Activated CD4-positive, alpha-beta T cell treated with anti-CD3 and anti-CD28 coated beads, Interleukin-2, amount 10 ng/mL, durations not matched to agents 24 days and 14 days (primary cell): ENCODE measurements at regions of chr1 and their contacts with region 1.

Region 1: GRCh38 chr1:211323156-211324063 is 3.2 kb upstream of the TRAF5 start:
- DNase-seq: peak; percentile 91
- H3K4me3 Mint-ChIP-seq: peak overlapping the region; percentile 15
- H3K27ac Mint-ChIP-seq: peak overlapping the region; percentile 88
- H3K4me1 Mint-ChIP-seq: peaks cover 57% of the 10 kb centered on the region
- H3K27me3 Mint-ChIP-seq: no peaks in the 10 kb centered on the region

Region 2: DNA sequence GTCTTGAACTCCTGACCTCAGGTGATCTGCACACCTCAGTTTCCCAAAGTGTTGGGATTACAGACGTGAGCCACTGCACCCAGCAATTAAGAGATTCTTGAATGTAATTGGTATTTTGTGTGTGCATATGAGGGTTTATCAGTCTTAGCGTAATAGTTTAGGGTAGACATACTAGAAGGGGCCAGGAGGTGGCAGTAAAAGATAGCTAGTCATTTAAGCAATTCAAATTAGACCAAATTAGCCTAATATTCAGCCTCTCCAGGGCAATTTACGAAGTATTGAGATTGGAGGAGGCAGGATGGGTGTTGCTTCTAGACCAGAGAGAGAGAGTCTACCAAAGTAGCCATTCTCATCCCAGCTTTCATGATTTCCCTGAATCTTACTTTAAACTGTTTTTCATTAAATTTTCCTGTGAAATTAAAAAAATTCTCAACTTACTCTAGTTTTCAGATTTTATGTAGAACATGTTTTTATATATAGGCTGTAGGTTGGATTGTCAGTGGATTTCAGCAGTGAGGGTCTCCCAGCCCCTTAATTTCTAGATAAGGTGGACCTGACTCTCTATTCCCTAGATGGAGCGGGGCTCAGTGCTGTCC is 875.0 kb before region 1 on chr1:
- intact Hi-C with region 1: loop called (anchors 5 kb)
- DNase-seq: peak; percentile 72
- H3K4me3 Mint-ChIP-seq: no peak overlapping the region
- H3K27ac Mint-ChIP-seq: no peak overlapping the region
- H3K4me1 Mint-ChIP-seq: peaks cover 24% of the 10 kb centered on the region
- H3K27me3 Mint-ChIP-seq: peaks cover 14% of the 10 kb centered on the region

Region 3: GRCh38 chr1:211296396-211296795 is 27.0 kb before region 1 on chr1:
- intact Hi-C with region 1: loop called (anchors 1 kb)
- DNase-seq: no peak
- H3K4me3 Mint-ChIP-seq: no peak overlapping the region
- H3K27ac Mint-ChIP-seq: peak overlapping the region; percentile 54
- H3K4me1 Mint-ChIP-seq: peaks cover 15% of the 10 kb centered on the region
- H3K27me3 Mint-ChIP-seq: no peaks in the 10 kb centered on the region

Region 4: DNA sequence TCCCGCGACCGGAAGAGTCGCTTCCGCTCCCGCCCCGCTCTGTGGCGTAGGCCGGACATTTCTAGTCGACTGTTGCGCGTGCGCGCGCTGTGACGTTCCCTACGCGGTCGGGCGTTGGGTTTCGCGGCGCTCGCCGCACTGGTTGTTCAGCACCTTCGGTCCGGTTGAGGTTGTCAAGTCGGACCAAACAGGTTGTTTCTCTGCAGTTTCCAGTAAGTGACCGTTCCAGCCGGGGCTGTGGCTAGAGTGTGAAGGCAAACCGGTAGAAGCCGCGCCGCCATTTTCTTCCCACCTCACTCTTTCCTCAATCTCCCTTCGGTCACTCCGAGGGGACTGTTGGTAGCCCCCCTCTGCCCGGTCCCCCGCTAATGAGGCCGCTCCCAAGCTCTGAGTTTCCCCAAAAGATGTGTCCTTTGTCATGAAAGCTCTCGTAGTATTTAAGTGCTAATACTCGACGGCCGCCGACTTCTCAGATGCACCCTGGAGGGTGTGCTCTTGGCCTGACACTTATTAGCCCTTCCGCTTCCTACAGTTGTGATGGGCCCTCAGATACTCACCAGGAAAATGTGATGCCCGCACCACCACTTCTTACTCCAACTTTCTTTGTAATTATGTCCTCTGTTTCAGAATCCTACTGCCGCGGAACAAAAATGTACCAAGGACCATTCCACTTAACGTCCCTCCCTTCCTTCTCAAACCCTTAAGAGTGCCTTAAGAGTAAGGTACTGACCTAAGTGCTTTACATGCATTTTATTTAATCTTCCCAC is 59.5 kb after region 1 on chr1:
- intact Hi-C with region 1: loop called (anchors 1 kb)
- DNase-seq: peak; percentile 95
- H3K4me3 Mint-ChIP-seq: peak overlapping the region; percentile 80
- H3K27ac Mint-ChIP-seq: peak overlapping the region; percentile 93
- H3K4me1 Mint-ChIP-seq: peaks cover 43% of the 10 kb centered on the region
- H3K27me3 Mint-ChIP-seq: peaks cover 6% of the 10 kb centered on the region

Region 5: DNA sequence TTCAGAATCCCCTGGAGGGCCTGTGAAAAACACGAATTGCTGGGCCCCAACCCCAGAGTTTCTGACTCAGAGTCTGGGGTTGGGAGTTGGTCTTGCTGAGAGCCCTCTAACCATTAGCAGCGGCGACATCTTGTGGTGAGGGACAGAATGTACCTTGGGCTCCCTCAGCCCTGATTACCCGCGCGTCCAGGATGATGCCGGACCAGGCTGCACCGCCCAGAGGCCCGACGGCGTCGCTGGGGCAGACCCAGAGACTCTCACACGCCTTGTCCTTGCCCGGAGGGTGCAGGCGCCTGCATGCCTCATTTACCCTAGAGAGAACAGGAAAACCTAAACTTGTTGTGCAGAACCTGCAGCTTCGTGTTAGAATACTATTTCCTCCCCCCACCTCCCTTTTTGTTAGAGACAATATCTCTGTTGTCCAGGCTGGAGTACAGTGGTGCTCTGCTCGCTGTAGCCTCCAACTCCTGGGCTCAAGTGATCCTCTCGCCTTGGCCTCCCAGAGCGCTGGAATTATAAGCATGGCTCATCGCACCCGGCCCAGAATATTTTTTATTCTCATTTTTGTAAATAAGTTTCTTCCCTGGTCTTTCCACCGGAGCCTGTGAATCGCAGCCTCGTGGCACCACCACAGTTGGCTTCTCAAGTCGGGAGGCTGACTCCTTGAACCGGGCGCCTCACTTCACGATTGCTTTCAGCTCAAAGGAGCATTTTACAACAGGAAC is 190.8 kb after region 1 on chr1:
- intact Hi-C with region 1: loop called (anchors 1 kb)
- DNase-seq: peak; percentile 91
- H3K4me3 Mint-ChIP-seq: peak overlapping the region; percentile 76
- H3K27ac Mint-ChIP-seq: peak overlapping the region; percentile 69
- H3K4me1 Mint-ChIP-seq: peaks cover 24% of the 10 kb centered on the region
- H3K27me3 Mint-ChIP-seq: peaks cover 12% of the 10 kb centered on the region

Region 6: DNA sequence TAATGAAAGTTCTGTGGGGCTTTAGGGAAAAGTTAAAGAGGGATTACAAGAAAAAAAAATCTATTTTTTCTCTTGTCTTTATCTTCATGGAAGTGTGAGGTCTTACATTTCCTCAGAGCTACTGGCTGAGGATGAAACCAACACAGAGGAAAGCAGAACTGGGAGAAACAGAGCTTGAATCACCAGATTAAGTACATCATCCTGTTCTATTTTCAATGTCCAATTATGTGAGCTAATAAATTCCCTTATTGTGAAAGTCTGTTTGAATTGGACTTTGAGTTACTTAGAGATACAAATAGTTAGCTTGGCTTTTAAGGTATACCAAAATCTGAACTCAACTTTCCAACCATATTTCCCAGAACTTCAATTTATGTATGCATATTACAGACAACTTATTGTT is 438.0 kb after region 1 on chr1:
- intact Hi-C with region 1: no loop called
- DNase-seq: no peak
- H3K4me3 Mint-ChIP-seq: no peak overlapping the region
- H3K27ac Mint-ChIP-seq: no peak overlapping the region
- H3K4me1 Mint-ChIP-seq: no peaks in the 10 kb centered on the region
- H3K27me3 Mint-ChIP-seq: no peaks in the 10 kb centered on the region

Region 7: GRCh38 chr1:211830330-211831142 is 507.1 kb after region 1 on chr1 and contains the start of gene LPGAT1:
- intact Hi-C with region 1: loop called (anchors 5 kb)
- DNase-seq: peak; percentile 91
- H3K4me3 Mint-ChIP-seq: peak within 1 kb of the TSS; percentile 91
- H3K27ac Mint-ChIP-seq: peak within 1 kb of the TSS; percentile 88
- H3K4me1 Mint-ChIP-seq: peaks cover 62% of the 10 kb centered on the region
- H3K27me3 Mint-ChIP-seq: no peaks in the 10 kb centered on the region
- total RNA-seq, gene LPGAT1: 35.6 and 42.1 TPM in 2 replicates

Region 8: GRCh38 chr1:211851174-211851573 is 527.8 kb after region 1 on chr1:
- intact Hi-C with region 1: no loop called
- DNase-seq: no peak
- H3K4me3 Mint-ChIP-seq: no peak overlapping the region
- H3K27ac Mint-ChIP-seq: no peak overlapping the region
- H3K4me1 Mint-ChIP-seq: no peaks in the 10 kb centered on the region
- H3K27me3 Mint-ChIP-seq: peaks cover 17% of the 10 kb centered on the region

Region 9: GRCh38 chr1:211885747-211886522 is 562.5 kb after region 1 on chr1:
- intact Hi-C with region 1: no loop called
- DNase-seq: no peak
- H3K4me3 Mint-ChIP-seq: no peak overlapping the region
- H3K27ac Mint-ChIP-seq: no peak overlapping the region
- H3K4me1 Mint-ChIP-seq: peaks cover 15% of the 10 kb centered on the region
- H3K27me3 Mint-ChIP-seq: peaks cover 16% of the 10 kb centered on the region